Thyroid gland (tissue), 4 donors: ENCODE measurements at regions of chr11 and their contacts with region 1.

Region 1: GRCh38 chr11:65117216-65118096 is at the start of gene ZNHIT2:
- DNase-seq: peak; percentile 100
- H3K4me3 ChIP-seq: peak within 1 kb of the TSS; percentile 60 to 94 (median 75)
- H3K27ac ChIP-seq: peak within 1 kb of the TSS; percentile 61 to 86 (median 82)
- H3K4me1 ChIP-seq: peaks cover 35 to 47% of the 10 kb centered on the region in 2 donors
- H3K27me3 ChIP-seq: no peaks in the 10 kb centered on the region
- CTCF ChIP-seq: peak; percentile 77 to 97 (median 94)
- POLR2A ChIP-seq: peak in 1 of 2 donors; percentile 85
- total RNA-seq, gene ZNHIT2: 17.3 to 38.5 (median 25.9) TPM

Region 2: DNA sequence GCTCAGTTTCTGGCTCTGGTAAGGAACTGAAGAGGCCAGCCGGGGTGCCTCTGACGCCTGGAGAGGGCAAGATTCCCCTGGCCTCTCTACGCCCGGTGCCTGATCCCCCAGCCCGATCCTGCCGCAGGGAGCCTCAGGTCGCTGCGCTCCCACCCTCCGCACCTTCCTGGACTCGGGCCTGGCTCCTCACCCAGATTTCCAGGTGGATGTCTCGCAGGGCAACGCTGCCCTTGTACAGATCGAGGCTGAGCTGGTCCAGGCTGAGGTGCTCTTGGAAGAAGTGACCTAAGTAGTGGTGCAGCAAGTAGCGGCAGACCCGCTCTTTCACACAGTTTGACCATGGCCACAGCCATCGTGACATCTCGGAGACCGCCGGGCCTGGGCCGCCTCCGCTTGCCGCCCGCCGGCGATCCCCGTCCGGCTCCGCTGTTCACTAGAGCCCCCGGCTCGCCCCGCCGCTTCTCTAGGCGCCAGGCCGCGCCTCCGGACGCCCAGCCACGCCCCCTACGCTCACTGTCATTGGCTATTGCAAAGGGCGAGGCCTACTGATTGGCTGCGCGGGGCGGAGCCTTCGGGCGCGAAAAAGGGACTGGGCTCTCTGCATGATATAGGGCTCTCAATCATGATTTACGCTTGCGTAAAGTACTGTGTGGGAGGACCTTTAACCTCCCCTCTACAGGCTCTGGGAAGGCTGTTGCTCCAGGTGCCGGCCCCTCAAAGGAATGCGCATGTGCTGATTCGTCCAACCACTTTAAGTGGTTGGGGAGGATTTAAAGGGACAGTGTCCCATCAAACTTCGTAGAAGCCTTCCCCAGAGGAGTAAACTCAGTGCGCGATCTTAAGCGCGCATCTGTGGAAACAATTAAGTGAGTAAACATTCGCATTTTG is 200.4 kb before region 1 on chr11 and contains the start of gene ATG2A:
- intact Hi-C with region 1: loop called (anchors 10 kb)
- DNase-seq: peak; percentile 100
- H3K4me3 ChIP-seq: peak within 1 kb of the TSS; percentile 88 to 95 (median 94)
- H3K27ac ChIP-seq: peak within 1 kb of the TSS; percentile 46 to 85 (median 76)
- H3K4me1 ChIP-seq: peaks cover 16 to 19% of the 10 kb centered on the region in 2 donors
- H3K27me3 ChIP-seq: no peaks in the 10 kb centered on the region
- CTCF ChIP-seq: peak in 1 of 6 experiments; percentile 25
- POLR2A ChIP-seq: peak; percentile 27 to 92
- total RNA-seq, gene ATG2A: 19.5 to 43.1 (median 36.7) TPM